CD4-positive, alpha-beta T cell (primary cell): ENCODE measurements at regions of chr16 and their contacts with region 1.

Region 1: DNA sequence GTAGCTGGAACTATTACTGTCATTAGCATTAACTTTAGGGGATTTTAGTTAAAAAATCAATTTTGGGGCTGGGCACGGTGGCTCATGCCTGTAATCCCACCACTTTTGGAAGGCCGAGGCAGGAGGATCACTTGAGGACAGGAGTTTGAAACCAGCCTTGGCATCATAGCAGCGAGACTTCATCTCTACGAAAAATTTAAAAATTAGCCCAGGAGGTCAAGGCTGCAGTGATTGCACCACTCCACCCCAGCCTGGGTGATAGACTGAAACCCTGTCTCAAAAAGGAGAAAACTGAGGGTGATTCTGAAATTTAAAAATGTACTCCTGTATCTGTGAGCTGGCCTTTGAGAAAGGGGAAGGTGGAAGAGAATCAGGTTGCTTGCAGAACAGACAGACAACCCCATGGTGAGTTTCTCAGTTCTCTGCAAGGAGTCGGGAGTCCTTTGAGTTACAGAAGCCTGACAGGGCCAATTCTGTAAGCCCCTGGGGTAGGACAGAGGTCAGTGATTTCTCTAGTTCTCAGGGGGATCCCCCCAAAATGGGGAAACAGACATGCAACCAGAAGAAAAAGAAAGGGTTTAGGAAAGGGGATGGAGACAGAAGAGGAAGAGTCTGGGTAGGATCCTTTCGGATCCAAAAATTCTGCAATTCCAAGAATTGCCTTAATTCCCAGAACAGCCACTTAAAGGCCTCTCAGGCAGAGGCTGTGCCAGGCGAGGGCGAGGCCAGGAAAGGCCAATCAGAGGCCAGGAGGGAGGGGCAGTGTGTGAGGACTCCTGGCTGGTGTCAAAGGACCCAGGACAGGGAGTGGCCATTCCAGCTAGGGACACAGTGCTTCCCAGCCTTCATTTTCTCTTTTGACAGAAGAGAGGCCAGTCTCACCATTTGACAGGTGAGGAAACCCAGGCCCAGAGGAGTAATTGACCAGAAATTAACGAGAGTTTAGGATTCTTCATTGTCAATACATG is 6.7 kb downstream of the NUPR1 start:
- DNase-seq: no peak
- ATAC-seq: no peak
- H3K4me3 ChIP-seq: no peak overlapping the region
- H3K4me3 Mint-ChIP-seq: peak overlapping the region; percentile 45
- H3K27ac ChIP-seq: no peak overlapping the region
- H3K27ac Mint-ChIP-seq: peak overlapping the region; percentile 33
- H3K4me1 ChIP-seq: peaks cover 35% of the 10 kb centered on the region
- H3K4me1 Mint-ChIP-seq: peaks cover 42% of the 10 kb centered on the region
- H3K27me3 ChIP-seq: no peaks in the 10 kb centered on the region
- H3K27me3 Mint-ChIP-seq: no peaks in the 10 kb centered on the region
- CTCF ChIP-seq: no peak

Region 2: DNA sequence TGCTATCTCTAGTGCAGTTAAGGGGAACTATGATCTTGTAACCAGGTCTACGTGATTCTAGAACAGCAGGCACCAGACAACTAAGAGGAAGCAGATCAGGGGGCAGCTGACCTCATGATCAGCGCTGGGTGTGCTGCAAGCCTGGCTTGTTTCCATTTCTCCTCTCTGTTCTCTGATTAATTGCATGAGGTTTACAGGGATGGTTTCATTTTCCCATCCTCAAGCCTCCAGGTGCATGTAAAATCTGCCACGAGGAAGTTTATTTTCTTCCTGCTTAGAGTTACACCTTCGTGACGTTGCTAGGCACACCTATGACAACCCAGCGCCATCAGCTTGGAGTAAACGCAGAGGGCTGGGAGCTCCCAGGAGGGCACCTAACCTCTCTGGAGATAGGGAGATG is 11.0 kb after region 1 on chr16:
- CTCF ChIA-PET with region 1: no interaction called
- POLR2A ChIA-PET with region 1: interaction called, 14 read pairs
- intact Hi-C with region 1: loop called in 1 of 2 experiments (anchors 1 kb)
- DNase-seq: peak in 3 of 14 experiments; percentile 34 to 54 (median 50)
- ATAC-seq: peak; percentile 51
- H3K4me3 ChIP-seq: no peak overlapping the region
- H3K4me3 Mint-ChIP-seq: no peak overlapping the region
- H3K27ac ChIP-seq: no peak overlapping the region
- H3K27ac Mint-ChIP-seq: peak overlapping the region; percentile 54
- H3K4me1 ChIP-seq: peaks cover 3% of the 10 kb centered on the region
- H3K4me1 Mint-ChIP-seq: peaks cover 11% of the 10 kb centered on the region
- H3K27me3 ChIP-seq: no peaks in the 10 kb centered on the region
- H3K27me3 Mint-ChIP-seq: no peaks in the 10 kb centered on the region
- CTCF ChIP-seq: no peak